GM10248 (cell line): ENCODE measurements at regions of chr12 and their contacts with region 1.

Region 1: DNA sequence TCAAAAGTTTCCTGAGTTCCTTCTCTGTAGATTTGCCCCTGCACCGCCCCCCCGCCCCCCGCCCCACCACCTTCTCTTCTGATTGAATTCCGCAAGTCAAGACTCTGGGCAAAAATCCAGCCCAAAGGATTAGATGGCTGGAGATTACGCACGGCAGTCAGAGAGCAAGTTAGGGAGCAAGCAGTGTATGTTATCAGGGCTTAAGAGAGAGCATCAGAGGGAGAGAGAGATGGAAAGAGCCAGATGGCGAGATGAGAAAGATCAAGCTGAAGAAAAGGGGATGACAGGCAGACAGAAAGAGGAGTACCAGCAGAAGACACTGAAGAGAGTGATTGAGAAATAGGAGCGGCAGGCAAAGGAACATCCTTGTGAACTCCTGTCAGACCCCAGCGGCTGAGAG is 13.9 kb upstream of the ANKRD33 start:
- DNase-seq: no peak
- CTCF ChIP-seq: no peak

Region 2: DNA sequence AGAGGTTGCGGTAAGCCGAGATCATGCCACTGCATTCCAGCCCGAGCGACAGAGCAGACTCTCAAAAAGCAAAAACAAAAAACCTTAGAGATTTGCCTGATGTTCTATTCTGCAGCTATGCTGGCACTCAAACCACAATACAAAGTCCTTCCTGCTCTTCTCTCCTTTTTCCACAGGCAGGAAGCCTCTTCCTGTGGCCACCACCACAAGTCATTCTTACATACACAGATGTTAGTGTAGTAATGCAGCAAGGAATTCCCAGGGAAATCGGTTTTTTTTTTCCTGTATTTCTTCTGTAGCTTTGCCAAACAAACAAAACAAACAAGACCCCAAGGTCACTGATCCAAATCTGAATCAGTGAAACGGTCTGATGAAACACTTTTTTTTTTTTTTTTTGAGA is 129.8 kb before region 1 on chr12:
- CTCF ChIA-PET with region 1: no interaction called
- POLR2A ChIA-PET with region 1: no interaction called
- DNase-seq: no peak
- CTCF ChIP-seq: no peak

Region 3: GRCh38 chr12:51886021-51886322 is 12.0 kb after region 1 on chr12:
- CTCF ChIA-PET with region 1: interaction called, 13 read pairs
- POLR2A ChIA-PET with region 1: no interaction called
- DNase-seq: no peak
- CTCF ChIP-seq: no peak

Region 4: GRCh38 chr12:51911788-51912711 is 38.0 kb after region 1 on chr12:
- CTCF ChIA-PET with region 1: no interaction called
- POLR2A ChIA-PET with region 1: no interaction called
- DNase-seq: no peak
- CTCF ChIP-seq: no peak